PC-3 (cell line): ENCODE measurements at regions of chr9 and their contacts with region 1.

Region 1: DNA sequence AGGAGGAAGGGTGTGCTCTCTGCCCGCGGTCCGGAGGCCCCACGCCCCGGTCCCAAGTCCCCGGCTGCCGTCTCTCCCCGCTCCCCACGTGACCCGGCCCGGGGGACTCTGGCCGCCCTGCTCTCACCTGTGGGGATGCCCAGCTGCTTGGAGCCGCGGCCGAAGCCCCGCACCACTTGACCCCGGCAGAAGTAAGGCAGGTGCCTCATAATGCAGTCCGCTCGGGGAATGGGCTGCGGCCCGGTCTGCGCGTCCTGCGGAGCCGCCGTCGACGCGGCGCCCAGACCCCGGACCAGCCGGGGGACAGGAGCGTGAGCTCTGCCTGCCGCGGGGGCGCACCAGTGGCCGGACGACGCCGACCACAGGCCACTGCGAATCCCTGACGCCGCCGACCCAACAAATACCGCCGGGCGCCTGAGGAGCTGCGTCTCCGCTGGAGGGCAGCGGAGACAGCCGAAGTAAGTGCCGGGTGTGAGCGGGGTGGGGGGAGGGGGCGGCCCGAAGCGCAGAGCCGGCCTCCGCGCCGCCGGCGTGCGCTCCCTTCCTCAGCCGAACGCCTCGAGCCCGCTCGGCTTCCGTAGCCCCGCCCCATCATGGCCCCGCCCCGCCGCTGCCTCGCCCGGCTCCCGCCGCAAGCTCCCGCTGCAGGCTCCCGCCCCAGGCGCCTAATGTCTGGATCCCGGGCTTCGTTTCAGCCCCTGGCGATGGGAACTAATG is at the start of gene RFK:
- DNase-seq: peak; percentile 81
- ATAC-seq: peak; percentile 85
- H3K4me3 ChIP-seq: peak within 1 kb of the TSS; percentile 94
- H3K27ac ChIP-seq: peak within 1 kb of the TSS; percentile 61
- H3K4me1 ChIP-seq: no peaks in the 10 kb centered on the region; the same call in 1 of the 2 replicates
- H3K27me3 ChIP-seq: no peaks in the 10 kb centered on the region
- CTCF ChIP-seq: peak; percentile 38
- total RNA-seq, gene RFK: 8.1 and 9.7 TPM in 2 replicates

Region 2: GRCh38 chr9:76595645-76596044 is 201.5 kb after region 1 on chr9:
- CTCF ChIA-PET with region 1: no interaction called
- POLR2A ChIA-PET with region 1: no interaction called
- intact Hi-C with region 1: no loop called
- DNase-seq: no peak
- ATAC-seq: no peak
- H3K4me3 ChIP-seq: no peak overlapping the region
- H3K27ac ChIP-seq: no peak overlapping the region
- H3K4me1 ChIP-seq: no peaks in the 10 kb centered on the region
- H3K27me3 ChIP-seq: no peaks in the 10 kb centered on the region
- CTCF ChIP-seq: no peak

Region 3: GRCh38 chr9:76658535-76659231 is 264.6 kb after region 1 on chr9:
- CTCF ChIA-PET with region 1: no interaction called
- POLR2A ChIA-PET with region 1: interaction called, 12 read pairs
- intact Hi-C with region 1: no loop called
- DNase-seq: peak; percentile 39
- ATAC-seq: peak; percentile 58
- H3K4me3 ChIP-seq: no peak overlapping the region
- H3K27ac ChIP-seq: no peak overlapping the region
- H3K4me1 ChIP-seq: no peaks in the 10 kb centered on the region
- H3K27me3 ChIP-seq: no peaks in the 10 kb centered on the region
- CTCF ChIP-seq: peak; percentile 62